ENCODE measurements at regions of chr12 and their contacts with region 1.

Region 1: GRCh38 chr12:9707864-9708808 is 24.8 kb downstream of the CLECL1 start:
- DNase-seq: no peak
- H3K4me3 ChIP-seq: no peak overlapping the region
- H3K27me3 ChIP-seq: no peaks in the 10 kb centered on the region
- CTCF ChIP-seq: peak; percentile 84

Region 2: GRCh38 chr12:9634177-9634803 is 73.8 kb before region 1 on chr12:
- CTCF ChIA-PET with region 1: interaction called, 135 read pairs
- POLR2A ChIA-PET with region 1: no interaction called
- DNase-seq: no peak
- H3K4me3 ChIP-seq: no peak overlapping the region
- H3K27me3 ChIP-seq: no peaks in the 10 kb centered on the region; the same call in 1 of the 2 replicates
- CTCF ChIP-seq: peak; percentile 71

Region 3: DNA sequence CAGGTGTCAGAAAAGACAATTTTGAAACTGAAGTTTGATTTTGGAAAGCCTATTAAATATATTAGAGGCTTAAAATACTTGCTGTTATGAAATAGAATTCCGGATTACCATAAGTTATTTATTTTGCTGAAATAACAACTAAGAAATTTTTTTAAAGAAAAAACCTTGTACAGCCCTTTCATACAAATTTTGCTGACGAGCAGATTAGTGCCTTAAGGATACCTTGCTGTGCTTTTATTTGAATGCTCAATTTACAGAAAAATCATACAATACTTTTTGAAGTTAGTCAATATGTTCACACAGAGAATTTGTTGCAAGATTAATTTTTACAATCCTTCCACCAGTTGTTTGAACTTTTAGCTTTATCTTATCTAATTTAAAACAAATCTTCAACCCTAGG is 68.1 kb before region 1 on chr12:
- CTCF ChIA-PET with region 1: interaction called, 135 read pairs
- POLR2A ChIA-PET with region 1: no interaction called
- DNase-seq: no peak
- H3K4me3 ChIP-seq: no peak overlapping the region
- H3K27me3 ChIP-seq: no peaks in the 10 kb centered on the region
- CTCF ChIP-seq: no peak

Region 4: GRCh38 chr12:9647825-9648700 is 60.1 kb before region 1 on chr12:
- CTCF ChIA-PET with region 1: interaction called, 26 read pairs
- POLR2A ChIA-PET with region 1: interaction called, 3 read pairs
- DNase-seq: no peak
- H3K4me3 ChIP-seq: peak overlapping the region; percentile 73
- H3K27me3 ChIP-seq: no peaks in the 10 kb centered on the region
- CTCF ChIP-seq: no peak